ENCODE measurements at regions of chr7 and their contacts with region 1.

Region 1: DNA sequence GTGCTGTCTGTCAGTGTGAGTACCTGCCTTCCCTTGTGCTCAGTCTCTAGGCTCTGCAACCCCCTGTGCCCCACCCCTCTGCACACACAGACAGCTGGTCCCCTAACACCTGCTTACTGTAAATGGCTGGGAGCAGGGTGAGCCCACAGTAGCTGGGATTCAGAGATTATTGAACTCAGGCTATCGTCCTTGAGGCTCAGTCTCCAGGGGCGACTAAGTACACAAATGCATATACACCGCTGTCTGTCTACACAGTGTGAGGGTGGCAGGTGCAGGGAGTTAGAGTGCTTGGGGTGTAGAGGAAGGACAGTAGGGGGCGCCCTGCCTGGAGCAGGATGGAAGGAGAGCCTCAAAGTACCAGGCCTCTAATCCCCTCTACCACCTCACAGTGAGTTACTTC is 12.9 kb downstream of the UPP1 start:
- DNase-seq: no peak
- H3K4me3 Mint-ChIP-seq: no peak overlapping the region
- H3K27ac Mint-ChIP-seq: no peak overlapping the region
- H3K4me1 Mint-ChIP-seq: peaks cover 23% of the 10 kb centered on the region
- H3K27me3 Mint-ChIP-seq: no peaks in the 10 kb centered on the region
- CTCF ChIP-seq: peak; percentile 23

Region 2: GRCh38 chr7:47991741-47992311 is 110.1 kb before region 1 on chr7:
- CTCF ChIA-PET with region 1: interaction called, 12 read pairs
- POLR2A ChIA-PET with region 1: no interaction called
- intact Hi-C with region 1: no loop called
- DNase-seq: peak; percentile 66
- H3K4me3 Mint-ChIP-seq: no peak overlapping the region
- H3K27ac Mint-ChIP-seq: no peak overlapping the region
- H3K4me1 Mint-ChIP-seq: no peaks in the 10 kb centered on the region
- H3K27me3 Mint-ChIP-seq: no peaks in the 10 kb centered on the region
- CTCF ChIP-seq: peak; percentile 48